Heart right ventricle (tissue), 16 donors: ENCODE measurements at regions of chr5 and their contacts with region 1.

Region 1: GRCh38 chr5:31144364-31144763 is 49.1 kb upstream of the CDH6 start:
- DNase-seq: no peak
- ATAC-seq: no peak
- H3K4me3 ChIP-seq: no peak overlapping the region
- H3K27ac ChIP-seq: no peak overlapping the region
- H3K4me1 ChIP-seq: no peaks in the 10 kb centered on the region
- H3K27me3 ChIP-seq: no peaks in the 10 kb centered on the region
- CTCF ChIP-seq: no peak

Region 2: GRCh38 chr5:31798168-31798567 is 653.8 kb after region 1 on chr5:
- intact Hi-C with region 1: loop called in 1 of 10 experiments (anchors 5 kb)
- DNase-seq: no peak
- ATAC-seq: no peak
- H3K4me3 ChIP-seq: no peak overlapping the region
- H3K27ac ChIP-seq: no peak overlapping the region
- H3K4me1 ChIP-seq: peaks cover 0 to 15% (median 0%) of the 10 kb centered on the region in 9 donors
- H3K27me3 ChIP-seq: no peaks in the 10 kb centered on the region
- CTCF ChIP-seq: no peak